Heart left ventricle (tissue), 16 donors: ENCODE measurements at regions of chr9 and their contacts with region 1.

Region 1: GRCh38 chr9:35690431-35691333 is 957 bp upstream of the TPM2 start:
- DNase-seq: peak; percentile 87 to 89 (median 89)
- ATAC-seq: peak; percentile 23 to 65 (median 60)
- H3K4me3 ChIP-seq: peak overlapping the region; percentile 61 to 93 (median 74)
- H3K27ac ChIP-seq: peak overlapping the region; percentile 88 to 98 (median 97)
- H3K4me1 ChIP-seq: peaks cover 2 to 44% (median 26%) of the 10 kb centered on the region in 12 donors
- H3K27me3 ChIP-seq: no peaks in the 10 kb centered on the region
- CTCF ChIP-seq: no peak
- POLR2A ChIP-seq: peak in 1 of 2 donors; percentile 34

Region 2: GRCh38 chr9:35646533-35647265 is 44.0 kb before region 1 on chr9:
- intact Hi-C with region 1: loop called in 1 of 10 experiments (anchors 5 kb)
- DNase-seq: peak; percentile 93 to 97 (median 93)
- ATAC-seq: peak; percentile 83 to 97 (median 96)
- H3K4me3 ChIP-seq: peak overlapping the region; percentile 41 to 77 (median 64)
- H3K27ac ChIP-seq: peak overlapping the region; percentile 54 to 89 (median 81)
- H3K4me1 ChIP-seq: peaks cover 0 to 63% (median 9%) of the 10 kb centered on the region in 12 donors
- H3K27me3 ChIP-seq: no peaks in the 10 kb centered on the region
- CTCF ChIP-seq: peak; percentile 92 to 99 (median 96)
- POLR2A ChIP-seq: peak in 1 of 2 donors; percentile 85